HCT116 (cell line): ENCODE measurements at regions of chr20 and their contacts with region 1.

Region 1: DNA sequence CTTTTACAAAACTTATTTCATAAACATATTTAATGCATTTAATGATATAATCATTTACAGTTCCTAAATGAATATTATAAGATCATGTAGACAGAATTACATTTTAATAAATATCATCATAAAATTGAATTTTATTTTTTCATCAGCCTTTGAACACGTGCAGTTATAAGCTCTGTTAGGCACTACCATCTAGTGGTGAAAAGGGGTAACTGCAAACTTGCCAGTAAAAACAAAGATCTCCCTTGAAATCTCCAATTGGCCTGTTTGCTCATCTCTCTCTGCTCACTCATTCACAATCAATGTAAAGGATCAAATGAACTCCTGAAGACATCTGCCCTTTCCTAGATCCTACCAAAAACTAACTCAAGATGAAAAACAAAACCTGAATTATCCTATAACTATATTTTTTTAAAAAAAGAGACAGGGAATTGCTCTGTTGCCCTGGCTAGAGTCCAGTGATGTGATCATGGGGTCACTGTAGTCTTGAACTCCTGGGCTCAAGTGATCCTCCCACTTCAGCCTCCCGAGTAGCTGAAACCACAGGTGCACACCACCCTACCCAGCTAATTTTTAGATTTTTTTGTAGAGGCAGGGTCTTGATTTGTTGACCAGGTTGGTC is 31.7 kb downstream of the SAMHD1 start:
- DNase-seq: peak; percentile 49
- ATAC-seq: peak; percentile 80
- H3K4me3 ChIP-seq: no peak overlapping the region
- H3K27ac ChIP-seq: no peak overlapping the region
- H3K4me1 ChIP-seq: peaks cover 0 to 3% of the 10 kb centered on the region in 2 experiments; a peak in 1 of 4 replicates
- H3K27me3 ChIP-seq: no peaks in the 10 kb centered on the region
- CTCF ChIP-seq: peak; percentile 66 to 87 (median 77); a peak in 5 of 6 replicates
- POLR2A ChIP-seq: no peak
- RAD21 ChIP-seq: peak; percentile 81

Region 2: DNA sequence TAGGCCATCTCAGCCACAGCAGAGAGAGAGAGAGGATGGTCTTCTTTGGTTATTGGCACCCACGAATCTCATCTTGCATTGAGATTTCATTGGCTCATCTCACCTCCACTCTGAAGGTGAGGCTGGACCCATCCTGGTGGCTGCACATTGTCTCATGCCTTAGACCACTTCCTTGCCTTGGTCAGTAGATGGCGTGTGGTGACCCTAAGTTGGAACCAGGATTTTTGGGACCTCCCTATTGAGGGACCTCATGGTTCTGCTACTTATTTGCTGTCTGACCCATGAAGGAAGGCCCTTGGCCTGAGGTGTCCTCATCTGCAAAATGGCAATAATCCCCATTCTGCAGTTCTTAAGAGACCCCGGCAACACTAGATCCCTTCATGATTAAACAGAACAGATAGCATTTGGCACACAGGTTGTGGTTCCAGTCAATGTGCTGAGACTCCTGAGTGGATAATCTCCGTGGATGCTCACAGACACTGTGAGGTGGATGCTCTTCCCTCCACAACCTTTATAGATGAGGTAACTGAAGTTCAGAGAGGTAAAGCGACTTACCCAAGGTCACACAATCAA is 705.1 kb before region 1 on chr20:
- CTCF ChIA-PET with region 1: no interaction called
- POLR2A ChIA-PET with region 1: no interaction called
- RAD21 ChIA-PET with region 1: no interaction called
- intact Hi-C with region 1: loop called (anchors 10 kb)
- DNase-seq: no peak
- ATAC-seq: peak; percentile 70
- H3K4me3 ChIP-seq: no peak overlapping the region
- H3K27ac ChIP-seq: no peak overlapping the region
- H3K4me1 ChIP-seq: peaks cover 3 to 5% of the 10 kb centered on the region in 2 experiments; a peak in 2 of 4 replicates
- H3K27me3 ChIP-seq: no peaks in the 10 kb centered on the region
- CTCF ChIP-seq: peak; percentile 65 to 79 (median 76)
- POLR2A ChIP-seq: no peak
- RAD21 ChIP-seq: peak; percentile 75

Region 3: DNA sequence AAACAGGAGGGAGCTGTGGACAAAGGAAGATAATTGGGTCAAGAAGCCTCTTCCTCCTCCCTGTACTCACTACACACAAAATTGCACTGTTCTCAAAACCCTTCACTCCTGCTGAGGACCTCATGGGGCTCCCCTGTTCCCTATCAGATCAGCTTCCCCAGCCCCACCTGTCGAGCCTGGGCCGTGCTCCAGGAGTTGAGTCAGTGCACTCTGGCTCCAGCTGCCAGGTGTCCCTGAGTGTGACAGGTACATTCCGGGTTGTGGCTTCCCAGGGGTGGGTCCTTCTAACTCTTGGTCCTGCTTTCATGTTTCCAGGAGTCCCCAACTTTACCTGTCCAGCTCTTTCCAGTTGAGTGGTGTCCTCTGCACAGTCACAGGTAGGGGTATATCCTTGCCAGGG is 305.9 kb before region 1 on chr20:
- CTCF ChIA-PET with region 1: no interaction called
- POLR2A ChIA-PET with region 1: no interaction called
- RAD21 ChIA-PET with region 1: no interaction called
- intact Hi-C with region 1: loop called (anchors 10 kb)
- DNase-seq: no peak
- ATAC-seq: no peak; the same call in 1 of the 2 replicates
- H3K4me3 ChIP-seq: no peak overlapping the region
- H3K27ac ChIP-seq: 0 out of 2 replicates have a peak overlapping the region, but pooled peaks have one; percentile 10
- H3K4me1 ChIP-seq: peaks cover 0 to 13% of the 10 kb centered on the region in 2 experiments; a peak in 2 of 4 replicates
- H3K27me3 ChIP-seq: no peaks in the 10 kb centered on the region
- CTCF ChIP-seq: no peak
- POLR2A ChIP-seq: no peak
- RAD21 ChIP-seq: no peak

Region 4: GRCh38 chr20:36932476-36933426 is 12.9 kb after region 1 on chr20:
- CTCF ChIA-PET with region 1: no interaction called
- POLR2A ChIA-PET with region 1: no interaction called
- RAD21 ChIA-PET with region 1: no interaction called
- intact Hi-C with region 1: no loop called
- DNase-seq: no peak
- ATAC-seq: no peak
- H3K4me3 ChIP-seq: no peak overlapping the region
- H3K27ac ChIP-seq: no peak overlapping the region
- H3K4me1 ChIP-seq: peaks cover 0 to 10% of the 10 kb centered on the region in 2 experiments; a peak in 2 of 4 replicates
- H3K27me3 ChIP-seq: no peaks in the 10 kb centered on the region
- CTCF ChIP-seq: no peak
- POLR2A ChIP-seq: no peak
- RAD21 ChIP-seq: no peak